GM23248 (cell line): ENCODE measurements at regions of chr18 and their contacts with region 1.

Region 1: GRCh38 chr18:61679836-61680235 is 213.0 kb downstream of the RNF152 start:
- DNase-seq: peak; percentile 43
- H3K4me3 ChIP-seq: no peak overlapping the region
- H3K27ac ChIP-seq: no peak overlapping the region
- H3K4me1 ChIP-seq: peaks cover 11% of the 10 kb centered on the region; the same call in 1 of the 2 replicates
- H3K27me3 ChIP-seq: no peaks in the 10 kb centered on the region

Region 2: DNA sequence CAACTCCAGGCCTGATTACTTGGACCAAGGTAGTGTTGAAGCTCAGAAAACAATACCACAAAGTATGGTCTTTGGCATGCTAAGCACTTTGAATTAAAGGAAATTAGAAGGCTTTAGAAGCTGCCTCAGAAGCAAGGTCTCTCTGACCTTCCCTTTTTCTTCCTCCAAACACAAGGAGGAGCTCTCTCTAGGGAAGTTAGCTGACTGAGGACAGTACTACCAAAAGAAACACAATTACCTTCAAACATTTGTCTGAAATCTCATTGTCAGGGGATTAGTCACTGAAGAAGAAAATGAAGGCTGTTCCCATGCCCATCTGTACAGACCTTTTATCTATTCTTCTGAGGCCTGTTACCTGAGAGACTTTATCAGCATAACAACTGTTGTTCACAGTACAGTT is 67.3 kb before region 1 on chr18:
- in situ Hi-C with region 1: loop called (anchors 10 kb)
- DNase-seq: no peak
- H3K4me3 ChIP-seq: no peak overlapping the region
- H3K27ac ChIP-seq: no peak overlapping the region
- H3K4me1 ChIP-seq: peaks cover 17% of the 10 kb centered on the region
- H3K27me3 ChIP-seq: no peaks in the 10 kb centered on the region